ENCODE measurements at regions of chr13 and their contacts with region 1.

Region 1: GRCh38 chr13:48094781-48095502 is at the start of gene MED4:
- DNase-seq: peak; percentile 98
- H3K4me3 ChIP-seq: peak within 1 kb of the TSS; percentile 93 to 98 (median 96)
- H3K27ac ChIP-seq: peak within 1 kb of the TSS; percentile 84 to 91 (median 89)
- H3K4me1 ChIP-seq: peaks cover 16 to 48% (median 43%) of the 10 kb centered on the region in 4 donors
- H3K27me3 ChIP-seq: no peaks in the 10 kb centered on the region
- CTCF ChIP-seq: peak; percentile 98 to 99 (median 99)
- EP300 ChIP-seq: no peak
- POLR2A ChIP-seq: peak; percentile 72
- total RNA-seq, gene MED4: 32.0 to 42.1 (median 37.1) TPM

Region 2: DNA sequence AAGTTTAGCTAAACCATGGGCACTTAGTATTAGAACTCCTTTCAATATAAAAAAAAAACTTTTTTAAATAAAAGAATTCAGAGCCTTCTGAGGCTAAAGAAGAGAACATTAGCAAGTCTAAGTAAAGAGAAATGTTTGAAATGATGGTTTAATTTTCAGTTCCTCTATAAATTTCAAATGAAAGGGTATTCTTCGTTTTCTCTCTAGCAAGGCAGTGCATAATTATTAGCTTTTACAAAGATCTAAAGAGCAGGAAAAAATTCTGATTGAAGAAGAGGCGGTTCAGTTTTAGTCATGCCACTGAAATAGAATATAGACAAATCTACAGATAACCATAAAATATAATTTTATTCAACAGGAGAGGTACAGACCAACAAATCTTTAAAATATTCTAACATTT is 111.9 kb before region 1 on chr13:
- intact Hi-C with region 1: no loop called
- DNase-seq: no peak
- H3K4me3 ChIP-seq: no peak overlapping the region
- H3K27ac ChIP-seq: no peak overlapping the region
- H3K4me1 ChIP-seq: no peaks in the 10 kb centered on the region
- H3K27me3 ChIP-seq: no peaks in the 10 kb centered on the region
- CTCF ChIP-seq: no peak
- EP300 ChIP-seq: no peak
- POLR2A ChIP-seq: no peak

Region 3: DNA sequence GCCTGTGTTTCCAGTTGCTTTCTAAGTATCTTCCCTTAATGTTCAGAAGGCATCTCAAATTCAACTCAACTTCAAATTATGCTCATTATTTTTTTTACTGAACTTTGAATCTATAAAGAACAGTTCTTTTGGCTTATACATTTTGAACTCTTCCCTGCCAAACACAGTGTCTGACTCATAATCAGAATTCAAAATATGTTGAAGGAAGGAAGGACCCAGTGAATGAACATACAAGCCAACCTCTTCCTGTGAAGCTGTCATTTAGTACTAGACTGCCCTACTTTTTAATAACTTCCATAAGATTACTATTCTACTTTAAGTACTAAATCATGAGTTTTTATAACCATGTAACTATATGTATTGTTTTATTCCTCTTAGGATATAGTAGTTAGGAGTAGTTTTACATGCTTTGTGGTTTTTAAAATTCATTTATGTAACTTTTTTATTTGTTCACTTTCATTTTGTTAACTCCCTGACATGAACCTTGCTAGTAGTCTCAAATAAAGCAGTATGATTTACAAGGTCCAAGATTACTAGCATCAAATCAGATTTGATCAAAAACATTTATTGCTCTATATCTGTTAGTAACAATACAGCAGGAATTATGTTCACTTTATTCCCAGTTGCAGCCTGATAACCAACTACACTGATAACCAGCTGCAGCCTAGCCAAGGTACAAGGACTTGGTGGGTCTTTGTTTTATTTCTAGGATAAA is 51.0 kb before region 1 on chr13:
- intact Hi-C with region 1: loop called (anchors 10 kb)
- DNase-seq: no peak
- H3K4me3 ChIP-seq: no peak overlapping the region
- H3K27ac ChIP-seq: no peak overlapping the region
- H3K4me1 ChIP-seq: peaks cover 0 to 1% (median 0%) of the 10 kb centered on the region in 4 donors
- H3K27me3 ChIP-seq: no peaks in the 10 kb centered on the region
- CTCF ChIP-seq: no peak
- EP300 ChIP-seq: no peak
- POLR2A ChIP-seq: no peak